Thyroid gland (tissue), 4 donors: ENCODE measurements at regions of chr6 and their contacts with region 1.

Region 1: DNA sequence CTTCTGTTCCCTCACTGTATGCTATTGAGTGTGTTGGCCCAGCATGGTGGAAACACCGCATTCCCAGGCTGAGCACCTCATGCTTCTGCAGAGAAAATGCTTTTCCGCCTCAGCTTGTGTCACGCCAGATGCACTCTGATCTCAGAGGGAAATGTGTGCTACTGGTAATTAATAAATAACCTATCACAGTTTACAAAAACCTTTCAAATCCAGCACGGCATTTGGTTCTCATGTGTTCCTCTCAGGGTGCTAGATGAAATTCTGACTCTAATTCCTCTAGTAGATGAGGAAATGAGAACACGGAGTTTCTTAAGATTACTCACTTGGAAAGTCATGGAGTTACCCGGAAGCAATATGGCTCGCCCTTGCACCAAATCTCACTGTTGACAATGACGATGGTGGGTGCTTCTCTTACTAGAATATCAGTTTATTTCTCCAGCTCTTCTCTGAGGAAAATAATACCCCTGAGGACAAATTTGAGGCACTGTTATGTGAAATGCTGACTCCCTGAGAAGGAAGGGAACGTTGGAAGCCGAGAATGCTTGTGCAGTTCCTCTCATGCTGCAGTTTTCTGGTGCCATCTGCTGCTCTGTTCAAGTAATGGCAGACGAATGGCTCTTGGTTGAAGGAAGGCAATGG is 116.6 kb downstream of the RNF144B start:
- DNase-seq: peak; percentile 69 to 70
- H3K4me3 ChIP-seq: no peak overlapping the region
- H3K27ac ChIP-seq: peak overlapping the region; percentile 6 to 70 (median 60)
- H3K4me1 ChIP-seq: peaks cover 8 to 13% of the 10 kb centered on the region in 2 donors
- H3K27me3 ChIP-seq: no peaks in the 10 kb centered on the region
- CTCF ChIP-seq: peak; percentile 67 to 99 (median 92)
- POLR2A ChIP-seq: no peak

Region 2: GRCh38 chr6:18323935-18324705 is 179.6 kb before region 1 on chr6:
- intact Hi-C with region 1: loop called (anchors 5 kb)
- DNase-seq: no peak
- H3K4me3 ChIP-seq: no peak overlapping the region
- H3K27ac ChIP-seq: no peak overlapping the region
- H3K4me1 ChIP-seq: peaks cover 18 to 31% of the 10 kb centered on the region in 2 donors
- H3K27me3 ChIP-seq: no peaks in the 10 kb centered on the region
- CTCF ChIP-seq: peak in 5 of 6 experiments; percentile 46 to 83 (median 72)
- POLR2A ChIP-seq: no peak

Region 3: GRCh38 chr6:18712595-18712994 is 208.9 kb after region 1 on chr6:
- intact Hi-C with region 1: no loop called
- DNase-seq: no peak
- H3K4me3 ChIP-seq: no peak overlapping the region
- H3K27ac ChIP-seq: no peak overlapping the region
- H3K4me1 ChIP-seq: peaks cover 0 to 3% of the 10 kb centered on the region in 2 donors
- H3K27me3 ChIP-seq: no peaks in the 10 kb centered on the region
- CTCF ChIP-seq: no peak
- POLR2A ChIP-seq: no peak